Activated CD4-positive, alpha-beta T cell treated with anti-CD3 and anti-CD28 coated beads, Interleukin-2, amount 10 ng/mL, durations not matched to agents 24 days and 14 days (primary cell): ENCODE measurements at regions of chr1 and their contacts with region 1.

Region 1: DNA sequence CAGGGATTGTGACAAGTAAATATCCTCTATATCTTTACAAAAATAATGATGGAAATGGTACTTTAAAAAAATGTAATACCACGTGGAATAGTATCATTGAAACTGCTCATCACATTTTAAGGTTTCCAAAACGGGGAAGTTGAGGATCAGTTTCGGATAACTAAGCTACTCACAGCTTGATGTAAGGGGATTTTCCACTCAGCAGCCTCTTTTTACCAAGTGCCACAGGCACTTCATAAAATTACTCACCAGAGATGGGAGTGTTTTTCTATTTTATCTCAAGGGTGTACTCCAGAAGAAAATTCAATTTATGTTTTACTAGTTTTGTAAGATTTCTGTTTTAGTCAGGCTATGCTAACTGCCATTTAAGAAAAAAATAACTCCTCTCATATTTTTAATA is 91.7 kb downstream of the TPR start:
- DNase-seq: peak; percentile 65
- H3K4me3 Mint-ChIP-seq: peak overlapping the region; percentile 55
- H3K27ac Mint-ChIP-seq: peak overlapping the region; percentile 83
- H3K4me1 Mint-ChIP-seq: peaks cover 45% of the 10 kb centered on the region
- H3K27me3 Mint-ChIP-seq: no peaks in the 10 kb centered on the region

Region 2: GRCh38 chr1:186272486-186272885 is 10.9 kb before region 1 on chr1:
- intact Hi-C with region 1: loop called (anchors 1 kb)
- DNase-seq: no peak
- H3K4me3 Mint-ChIP-seq: no peak overlapping the region
- H3K27ac Mint-ChIP-seq: no peak overlapping the region
- H3K4me1 Mint-ChIP-seq: peaks cover 9% of the 10 kb centered on the region
- H3K27me3 Mint-ChIP-seq: no peaks in the 10 kb centered on the region